Testis (tissue), 5 donors: ENCODE measurements at regions of chr2 and their contacts with region 1.

Region 1: DNA sequence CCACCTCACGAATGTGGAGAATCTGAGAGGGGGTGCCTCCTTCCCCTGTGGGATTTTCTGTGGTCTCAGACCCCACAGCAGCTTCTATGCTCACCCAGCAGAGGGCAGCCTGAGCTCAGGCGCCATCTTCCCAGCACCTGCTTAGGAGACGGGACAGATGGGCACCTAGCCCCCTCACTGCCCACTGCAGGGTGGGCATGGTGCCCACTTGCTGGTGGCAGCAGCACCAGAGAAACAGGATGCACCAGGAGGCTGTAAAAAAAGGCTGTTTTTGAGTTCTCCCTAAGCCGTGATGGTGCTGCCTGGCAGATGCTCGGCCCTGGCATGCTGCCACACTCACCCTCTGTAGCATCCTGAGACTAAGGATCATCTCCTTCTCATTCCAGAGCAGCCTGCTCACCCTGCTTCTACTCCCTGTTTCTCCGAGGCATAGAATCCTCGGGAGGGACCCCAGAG is 19.1 kb upstream of the SLC20A1 start:
- DNase-seq: peak; percentile 52
- H3K4me3 ChIP-seq: no peak overlapping the region
- H3K27ac ChIP-seq: peak overlapping the region in 1 of 2 donors; percentile 59
- H3K4me1 ChIP-seq: peaks cover 5% of the 10 kb centered on the region
- H3K27me3 ChIP-seq: no peaks in the 10 kb centered on the region
- CTCF ChIP-seq: peak; percentile 62 to 71 (median 67)
- POLR2A ChIP-seq: no peak

Region 2: DNA sequence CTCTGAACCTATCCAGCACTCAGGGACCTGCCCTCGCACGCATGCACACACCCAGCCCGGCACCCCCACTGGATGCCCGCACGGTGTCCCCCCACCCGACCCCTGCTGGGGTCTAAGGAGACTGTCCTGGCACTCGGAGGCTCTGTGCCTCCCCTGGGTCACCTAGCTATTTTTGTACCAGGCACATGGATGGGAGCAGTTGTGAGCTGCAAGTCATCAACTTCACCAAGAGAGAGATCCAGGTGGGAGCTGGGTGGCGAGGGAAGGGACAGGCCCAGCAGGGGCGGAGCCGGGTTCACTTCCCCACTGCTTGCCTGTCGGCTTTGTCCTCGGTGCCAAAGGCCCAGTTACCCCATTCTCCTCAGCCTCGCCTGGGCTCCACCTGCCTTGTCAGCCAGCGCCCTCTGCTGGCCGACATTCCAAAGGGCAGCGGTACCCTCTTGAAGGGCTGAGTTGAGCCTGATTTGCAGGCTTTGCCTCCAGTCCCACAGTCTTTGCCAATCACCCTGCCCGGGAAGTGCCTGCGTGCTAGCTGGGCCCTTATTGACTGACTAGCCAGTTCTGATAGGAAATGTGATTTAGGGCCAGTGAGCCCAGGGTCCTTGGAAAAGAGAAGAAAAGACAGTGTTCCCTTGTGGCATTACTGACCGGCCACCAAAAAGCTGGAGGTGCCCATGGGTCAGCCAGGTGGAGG is 100.0 kb after region 1 on chr2:
- intact Hi-C with region 1: loop called (anchors 10 kb)
- DNase-seq: peak; percentile 92
- H3K4me3 ChIP-seq: no peak overlapping the region
- H3K27ac ChIP-seq: no peak overlapping the region
- H3K4me1 ChIP-seq: no peaks in the 10 kb centered on the region
- H3K27me3 ChIP-seq: no peaks in the 10 kb centered on the region
- CTCF ChIP-seq: peak; percentile 81 to 92 (median 89)
- POLR2A ChIP-seq: no peak

Region 3: DNA sequence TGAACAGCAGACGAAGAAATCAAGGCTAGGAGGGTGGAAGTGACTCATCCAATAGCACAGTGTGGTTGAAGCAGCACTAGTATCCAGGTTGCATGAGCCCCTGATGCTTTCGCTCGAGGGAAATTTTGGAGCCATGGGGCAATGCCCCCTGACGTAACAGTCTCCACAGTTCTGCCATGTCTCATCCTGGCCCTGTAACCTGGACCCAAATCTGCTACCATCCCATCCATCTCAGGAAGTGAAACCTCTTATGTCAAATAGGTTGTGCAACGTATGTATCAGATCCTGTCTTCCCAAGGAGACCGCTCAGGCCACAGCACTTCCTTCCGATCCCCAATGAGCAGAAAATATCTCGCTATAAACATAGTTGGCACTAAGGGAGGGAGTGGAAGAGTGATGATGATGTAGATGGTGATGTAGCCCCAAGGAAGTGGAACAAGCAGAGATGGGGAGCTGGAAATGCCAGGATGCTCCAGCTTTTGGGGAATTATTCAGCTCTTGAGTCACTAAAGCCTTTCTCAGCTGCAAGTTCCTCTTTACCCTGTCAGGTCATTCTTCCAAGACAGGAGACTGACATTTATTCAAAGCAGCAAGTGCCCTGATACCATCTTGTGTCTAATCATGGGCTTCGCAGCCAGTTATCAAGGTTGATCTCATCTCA is 212.9 kb after region 1 on chr2:
- intact Hi-C with region 1: no loop called
- DNase-seq: no peak
- H3K4me3 ChIP-seq: no peak overlapping the region
- H3K27ac ChIP-seq: no peak overlapping the region
- H3K4me1 ChIP-seq: no peaks in the 10 kb centered on the region
- H3K27me3 ChIP-seq: no peaks in the 10 kb centered on the region
- CTCF ChIP-seq: no peak
- POLR2A ChIP-seq: no peak

Region 4: DNA sequence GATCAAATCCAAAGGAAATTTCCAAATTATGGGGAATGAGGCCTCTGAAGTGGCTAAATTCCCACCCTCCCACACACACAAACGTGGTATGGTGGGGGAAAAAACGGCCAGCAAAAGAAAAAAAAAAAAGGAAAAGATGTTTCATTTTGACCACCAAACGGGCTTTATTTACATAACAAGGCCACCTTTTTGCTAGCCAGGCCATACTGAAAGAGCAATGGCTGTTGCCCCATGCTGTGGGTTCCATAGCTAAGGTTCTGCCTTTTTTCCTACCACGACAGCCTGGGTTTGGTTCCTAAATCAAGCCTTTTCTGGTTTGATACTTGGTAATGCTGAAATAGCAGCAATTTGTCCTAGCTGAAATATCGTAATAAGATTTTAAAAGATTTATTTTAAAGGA is 224.0 kb after region 1 on chr2:
- intact Hi-C with region 1: no loop called
- DNase-seq: no peak
- H3K4me3 ChIP-seq: no peak overlapping the region
- H3K27ac ChIP-seq: no peak overlapping the region
- H3K4me1 ChIP-seq: no peaks in the 10 kb centered on the region
- H3K27me3 ChIP-seq: no peaks in the 10 kb centered on the region
- CTCF ChIP-seq: no peak
- POLR2A ChIP-seq: no peak